Caco-2 (cell line): ENCODE measurements at regions of chr6 and their contacts with region 1.

Region 1: GRCh38 chr6:55445648-55446204 is 118.5 kb downstream of the GFRAL start:
- DNase-seq: peak in 1 of 2 experiments; percentile 11
- H3K4me3 ChIP-seq: no peak overlapping the region
- H3K4me3 Mint-ChIP-seq: no peak overlapping the region
- H3K27ac Mint-ChIP-seq: no peak overlapping the region
- H3K4me1 ChIP-seq: peaks cover 12% of the 10 kb centered on the region
- H3K4me1 Mint-ChIP-seq: peaks cover 10% of the 10 kb centered on the region
- H3K27me3 ChIP-seq: no peaks in the 10 kb centered on the region
- H3K27me3 Mint-ChIP-seq: no peaks in the 10 kb centered on the region
- CTCF ChIP-seq: peak; percentile 38 to 74

Region 2: GRCh38 chr6:55276745-55277530 is 168.8 kb before region 1 on chr6:
- CTCF ChIA-PET with region 1: interaction called, 5 read pairs
- POLR2A ChIA-PET with region 1: no interaction called
- intact Hi-C with region 1: loop called (anchors 1 kb)
- DNase-seq: peak; percentile 58 to 65
- H3K4me3 ChIP-seq: no peak overlapping the region
- H3K4me3 Mint-ChIP-seq: no peak overlapping the region
- H3K27ac Mint-ChIP-seq: no peak overlapping the region
- H3K4me1 ChIP-seq: peaks cover 18% of the 10 kb centered on the region
- H3K4me1 Mint-ChIP-seq: no peaks in the 10 kb centered on the region
- H3K27me3 ChIP-seq: no peaks in the 10 kb centered on the region
- H3K27me3 Mint-ChIP-seq: no peaks in the 10 kb centered on the region
- CTCF ChIP-seq: peak; percentile 61 to 69

Region 3: DNA sequence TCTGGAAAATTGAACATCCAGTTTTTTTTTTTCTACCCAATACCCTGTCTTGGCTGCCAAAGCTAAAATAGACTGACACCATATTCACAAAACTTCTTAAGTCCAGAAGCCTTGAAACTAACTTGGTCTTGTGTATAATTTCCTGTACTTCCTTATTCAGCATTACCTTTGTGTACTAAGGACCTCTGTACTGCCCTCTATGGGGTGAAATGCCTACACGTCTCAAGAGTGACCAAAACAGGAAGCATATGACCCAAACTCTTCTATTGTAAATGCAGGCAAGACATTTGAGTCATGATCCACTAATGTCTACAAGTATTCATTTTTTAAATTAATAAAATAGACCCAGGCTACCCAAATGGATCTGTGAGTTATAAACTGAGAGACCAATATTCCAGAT is 82.9 kb after region 1 on chr6:
- CTCF ChIA-PET with region 1: no interaction called
- POLR2A ChIA-PET with region 1: no interaction called
- intact Hi-C with region 1: loop called (anchors 5 kb)
- DNase-seq: peak; percentile 37 to 49
- H3K4me3 ChIP-seq: no peak overlapping the region
- H3K4me3 Mint-ChIP-seq: no peak overlapping the region
- H3K27ac Mint-ChIP-seq: no peak overlapping the region
- H3K4me1 ChIP-seq: no peaks in the 10 kb centered on the region
- H3K4me1 Mint-ChIP-seq: no peaks in the 10 kb centered on the region
- H3K27me3 ChIP-seq: no peaks in the 10 kb centered on the region
- H3K27me3 Mint-ChIP-seq: no peaks in the 10 kb centered on the region
- CTCF ChIP-seq: peak in 1 of 2 experiments; percentile 38

Region 4: DNA sequence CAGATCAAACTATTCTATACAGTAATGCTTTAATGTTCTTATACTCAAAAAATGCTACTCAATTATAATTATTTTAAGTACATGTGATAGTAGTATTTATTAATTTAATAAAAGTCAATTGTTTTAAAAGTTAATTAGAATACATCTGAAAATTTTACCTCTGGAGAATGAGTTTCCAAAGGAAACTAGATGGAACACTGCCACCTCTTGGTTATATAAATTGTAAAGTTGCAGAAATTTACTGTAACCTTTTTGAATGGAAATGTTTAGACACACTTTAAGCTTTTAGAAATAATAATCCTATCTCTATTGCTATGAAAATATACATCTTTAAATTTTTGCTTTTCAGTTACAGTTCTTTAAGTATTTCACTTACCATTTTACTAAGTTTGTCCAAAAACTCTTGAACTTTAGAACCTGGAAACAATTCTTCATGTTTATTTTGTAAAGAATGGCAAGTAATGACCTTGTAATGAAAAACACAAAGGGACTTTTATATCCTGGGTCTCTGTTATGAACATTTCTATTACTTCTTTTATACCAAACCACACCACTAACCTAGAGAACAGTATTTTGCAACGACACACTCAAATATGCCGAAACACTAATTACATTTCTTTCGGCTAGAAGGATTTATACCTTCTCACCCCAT is 440.6 kb after region 1 on chr6:
- CTCF ChIA-PET with region 1: no interaction called
- POLR2A ChIA-PET with region 1: no interaction called
- intact Hi-C with region 1: loop called (anchors 1 kb)
- DNase-seq: no peak
- H3K4me3 ChIP-seq: no peak overlapping the region
- H3K4me3 Mint-ChIP-seq: no peak overlapping the region
- H3K27ac Mint-ChIP-seq: no peak overlapping the region
- H3K4me1 ChIP-seq: peaks cover 11% of the 10 kb centered on the region
- H3K4me1 Mint-ChIP-seq: peaks cover 4% of the 10 kb centered on the region
- H3K27me3 ChIP-seq: no peaks in the 10 kb centered on the region
- H3K27me3 Mint-ChIP-seq: no peaks in the 10 kb centered on the region
- CTCF ChIP-seq: peak; percentile 29 to 35

Region 5: DNA sequence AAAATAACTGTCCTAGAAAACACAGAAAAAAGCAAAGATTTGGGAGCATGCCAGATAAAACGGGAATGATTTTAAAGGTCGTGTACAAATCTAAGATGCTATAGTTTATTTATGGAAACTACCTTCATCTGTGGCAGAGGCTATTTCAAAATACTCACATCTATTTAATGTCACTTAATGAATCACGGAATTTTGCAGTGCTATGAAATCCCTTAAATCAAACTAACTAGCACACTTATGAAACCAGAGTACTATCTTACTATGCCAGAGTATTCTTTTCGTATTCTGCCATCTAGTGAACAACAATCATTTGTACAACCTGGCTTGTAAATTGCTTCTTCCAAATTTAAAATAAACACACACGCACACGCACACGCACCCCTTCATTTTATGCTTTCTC is 507.6 kb after region 1 on chr6:
- CTCF ChIA-PET with region 1: no interaction called
- POLR2A ChIA-PET with region 1: no interaction called
- intact Hi-C with region 1: loop called (anchors 1 kb)
- DNase-seq: no peak
- H3K4me3 ChIP-seq: no peak overlapping the region
- H3K4me3 Mint-ChIP-seq: no peak overlapping the region
- H3K27ac Mint-ChIP-seq: no peak overlapping the region
- H3K4me1 ChIP-seq: 0 out of 2 replicates have a peak, but pooled peaks cover 4% of the 10 kb centered on the region
- H3K4me1 Mint-ChIP-seq: no peaks in the 10 kb centered on the region
- H3K27me3 ChIP-seq: no peaks in the 10 kb centered on the region
- H3K27me3 Mint-ChIP-seq: no peaks in the 10 kb centered on the region
- CTCF ChIP-seq: no peak

Region 6: GRCh38 chr6:56115715-56116114 is 670.0 kb after region 1 on chr6:
- CTCF ChIA-PET with region 1: no interaction called
- POLR2A ChIA-PET with region 1: no interaction called
- intact Hi-C with region 1: no loop called
- DNase-seq: no peak
- H3K4me3 ChIP-seq: no peak overlapping the region
- H3K4me3 Mint-ChIP-seq: no peak overlapping the region
- H3K27ac Mint-ChIP-seq: no peak overlapping the region
- H3K4me1 ChIP-seq: no peaks in the 10 kb centered on the region
- H3K4me1 Mint-ChIP-seq: no peaks in the 10 kb centered on the region
- H3K27me3 ChIP-seq: no peaks in the 10 kb centered on the region
- H3K27me3 Mint-ChIP-seq: no peaks in the 10 kb centered on the region
- CTCF ChIP-seq: no peak